ENCODE measurements at regions of chr15 and their contacts with region 1.

Region 1: GRCh38 chr15:100873029-100873677 is 6.5 kb upstream of the ALDH1A3 start:
- DNase-seq: no peak
- ATAC-seq: peak; percentile 82

Region 2: DNA sequence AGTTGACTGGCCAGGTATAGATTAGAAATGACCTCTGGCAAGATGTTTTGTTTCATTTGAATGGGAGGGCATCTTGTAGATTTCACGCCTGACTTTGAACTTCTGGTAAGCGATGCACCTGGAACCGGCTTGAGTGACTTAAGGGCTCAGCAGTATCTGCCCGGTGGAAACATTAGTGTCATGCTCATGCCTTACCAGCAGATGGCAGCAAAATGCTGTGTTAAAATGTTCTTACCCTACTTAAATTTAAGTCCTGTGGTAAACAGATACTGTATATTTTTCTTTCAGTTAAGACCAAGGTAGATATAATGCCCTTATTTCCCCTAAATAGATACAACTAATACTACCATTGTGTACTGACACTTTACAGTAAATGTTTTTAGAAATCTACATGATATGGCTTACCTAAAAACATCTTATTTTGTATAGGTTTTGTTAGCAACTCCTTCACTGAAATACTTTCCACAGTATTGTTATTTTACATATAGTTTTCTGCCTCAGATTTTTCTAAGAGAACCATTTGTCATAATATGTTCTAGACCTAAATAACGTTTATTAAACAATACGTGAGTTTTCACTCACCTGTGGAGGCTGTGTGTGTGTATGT is 245.3 kb before region 1 on chr15:
- intact Hi-C with region 1: loop called (anchors 5 kb)
- DNase-seq: no peak
- ATAC-seq: peak; percentile 89

Region 3: GRCh38 chr15:100781061-100781960 is 91.8 kb before region 1 on chr15:
- intact Hi-C with region 1: no loop called
- DNase-seq: no peak
- ATAC-seq: no peak

Region 4: GRCh38 chr15:100934726-100935125 is 61.6 kb after region 1 on chr15:
- intact Hi-C with region 1: loop called (anchors 10 kb)
- DNase-seq: no peak
- ATAC-seq: no peak

Region 5: GRCh38 chr15:101008158-101009139 is 135.3 kb after region 1 on chr15:
- intact Hi-C with region 1: loop called (anchors 5 kb)
- DNase-seq: peak; percentile 89
- ATAC-seq: peak; percentile 88

Measured in Right ventricle myocardium superior (tissue), 1 donor.